ENCODE measurements at regions of chr12 and their contacts with region 1.

Region 1: GRCh38 chr12:122054842-122055520 is 23.6 kb upstream of the MLXIP start:
- DNase-seq: no peak
- ATAC-seq: no peak

Region 2: GRCh38 chr12:121678716-121679580 is 376.0 kb before region 1 on chr12:
- intact Hi-C with region 1: no loop called
- DNase-seq: no peak
- ATAC-seq: no peak

Region 3: DNA sequence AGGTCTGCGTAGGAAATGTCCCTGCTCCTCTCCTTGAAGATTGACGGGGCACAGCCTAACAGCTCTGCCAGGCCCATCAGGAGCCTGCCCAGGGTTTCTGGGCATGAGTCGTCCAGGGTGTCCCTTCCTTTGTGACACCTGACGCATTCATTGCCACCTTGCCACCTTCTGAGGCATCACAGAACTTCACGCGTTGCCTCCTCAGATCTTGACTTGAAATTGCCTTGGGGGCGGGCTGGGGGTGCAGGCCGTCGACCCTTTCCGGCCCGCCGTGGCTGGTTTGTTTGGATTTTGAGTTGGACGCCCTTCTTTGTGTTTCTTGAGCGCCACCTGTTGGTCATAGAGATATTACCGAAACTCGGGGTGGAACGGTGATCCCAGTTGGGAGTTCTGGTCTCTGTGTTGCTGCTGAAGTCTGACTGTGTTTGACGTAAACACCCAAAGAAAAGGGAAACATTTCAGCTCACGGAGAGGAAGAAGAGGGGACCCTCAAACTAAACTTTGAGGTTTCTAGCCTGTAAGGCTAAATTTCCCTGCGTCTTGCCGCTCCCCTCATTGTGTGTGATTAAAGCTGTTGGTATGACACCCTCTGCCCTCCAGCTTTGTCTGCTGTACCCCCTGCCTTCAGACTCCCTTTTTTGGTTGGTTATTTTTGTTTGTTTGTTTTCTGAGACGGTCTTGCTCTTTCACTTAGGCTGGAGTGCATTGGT is 68.2 kb after region 1 on chr12:
- intact Hi-C with region 1: loop called (anchors 1 to 2 kb)
- DNase-seq: peak; percentile 64
- ATAC-seq: peak; percentile 46 to 62

Region 4: DNA sequence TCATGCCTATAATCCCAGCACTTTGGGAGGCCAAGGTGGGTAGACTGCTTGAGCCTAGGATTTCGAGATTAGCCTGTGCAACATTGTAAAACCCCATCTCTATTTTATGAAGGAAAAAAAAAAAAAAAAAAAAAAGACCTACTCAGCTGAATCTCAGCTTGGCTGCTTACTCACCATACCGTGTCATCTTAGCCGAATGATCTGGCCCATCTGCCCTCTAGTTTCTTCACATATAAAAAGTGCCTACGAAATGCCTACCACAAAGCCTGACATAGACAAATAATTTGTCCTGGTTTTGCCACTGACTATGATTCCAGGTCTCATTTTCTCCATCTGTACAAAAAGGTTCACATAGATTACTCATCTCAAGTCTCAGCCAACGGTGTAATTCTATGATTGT is 160.8 kb after region 1 on chr12:
- intact Hi-C with region 1: no loop called
- DNase-seq: no peak
- ATAC-seq: no peak